Caco-2 (cell line): ENCODE measurements at regions of chr4 and their contacts with region 1.

Region 1: GRCh38 chr4:111890412-111890811 is 254.8 kb upstream of the FAM241A start:
- DNase-seq: no peak
- H3K4me3 ChIP-seq: no peak overlapping the region
- H3K4me3 Mint-ChIP-seq: no peak overlapping the region
- H3K27ac Mint-ChIP-seq: no peak overlapping the region
- H3K4me1 ChIP-seq: no peaks in the 10 kb centered on the region
- H3K4me1 Mint-ChIP-seq: no peaks in the 10 kb centered on the region
- H3K27me3 ChIP-seq: no peaks in the 10 kb centered on the region
- H3K27me3 Mint-ChIP-seq: no peaks in the 10 kb centered on the region
- CTCF ChIP-seq: no peak

Region 2: GRCh38 chr4:111330786-111331185 is 559.6 kb before region 1 on chr4:
- CTCF ChIA-PET with region 1: no interaction called
- POLR2A ChIA-PET with region 1: no interaction called
- intact Hi-C with region 1: loop called (anchors 10 kb)
- DNase-seq: no peak
- H3K4me3 ChIP-seq: no peak overlapping the region
- H3K4me3 Mint-ChIP-seq: no peak overlapping the region
- H3K27ac Mint-ChIP-seq: no peak overlapping the region
- H3K4me1 ChIP-seq: no peaks in the 10 kb centered on the region
- H3K4me1 Mint-ChIP-seq: no peaks in the 10 kb centered on the region
- H3K27me3 ChIP-seq: no peaks in the 10 kb centered on the region
- H3K27me3 Mint-ChIP-seq: peaks cover 4% of the 10 kb centered on the region
- CTCF ChIP-seq: no peak

Region 3: GRCh38 chr4:111722213-111722720 is 168.1 kb before region 1 on chr4:
- CTCF ChIA-PET with region 1: no interaction called
- POLR2A ChIA-PET with region 1: no interaction called
- intact Hi-C with region 1: no loop called
- DNase-seq: no peak
- H3K4me3 ChIP-seq: no peak overlapping the region
- H3K4me3 Mint-ChIP-seq: no peak overlapping the region
- H3K27ac Mint-ChIP-seq: no peak overlapping the region
- H3K4me1 ChIP-seq: no peaks in the 10 kb centered on the region
- H3K4me1 Mint-ChIP-seq: no peaks in the 10 kb centered on the region
- H3K27me3 ChIP-seq: no peaks in the 10 kb centered on the region
- H3K27me3 Mint-ChIP-seq: peaks cover 4% of the 10 kb centered on the region
- CTCF ChIP-seq: no peak